Psoas muscle (tissue), 8 donors: ENCODE measurements at regions of chr22 and their contacts with region 1.

Region 1: GRCh38 chr22:17077255-17077654 is 7.5 kb upstream of the IL17RA start:
- DNase-seq: no peak
- ATAC-seq: no peak
- H3K4me3 ChIP-seq: no peak overlapping the region
- H3K27ac ChIP-seq: no peak overlapping the region
- H3K4me1 ChIP-seq: no peaks in the 10 kb centered on the region
- H3K27me3 ChIP-seq: no peaks in the 10 kb centered on the region
- CTCF ChIP-seq: no peak

Region 2: DNA sequence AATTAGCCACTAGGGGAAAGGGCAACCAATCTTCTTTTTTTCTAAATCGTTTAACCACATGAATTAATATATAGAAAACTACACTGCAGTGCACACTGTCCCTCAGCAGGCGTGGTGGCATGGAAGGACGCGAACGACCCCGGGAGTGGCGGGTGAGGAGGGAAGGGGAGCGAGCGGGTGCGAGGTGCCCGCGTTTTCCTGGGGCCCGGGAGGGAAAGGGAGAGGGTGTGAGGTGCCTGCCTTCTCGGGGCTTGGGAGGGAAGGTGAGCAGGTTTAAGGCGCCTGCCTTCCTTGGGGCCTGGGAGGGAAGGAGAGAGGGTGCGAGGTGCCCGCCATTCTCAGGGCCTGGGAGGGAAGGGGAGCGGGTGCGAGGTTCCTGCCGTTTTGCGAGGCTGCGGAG is 70.0 kb before region 1 on chr22:
- intact Hi-C with region 1: no loop called
- DNase-seq: peak in 1 of 2 donors; percentile 35
- ATAC-seq: no peak
- H3K4me3 ChIP-seq: no peak overlapping the region
- H3K27ac ChIP-seq: no peak overlapping the region
- H3K4me1 ChIP-seq: no peaks in the 10 kb centered on the region
- H3K27me3 ChIP-seq: peaks cover 0 to 18% (median 3%) of the 10 kb centered on the region in 3 donors
- CTCF ChIP-seq: no peak

Region 3: DNA sequence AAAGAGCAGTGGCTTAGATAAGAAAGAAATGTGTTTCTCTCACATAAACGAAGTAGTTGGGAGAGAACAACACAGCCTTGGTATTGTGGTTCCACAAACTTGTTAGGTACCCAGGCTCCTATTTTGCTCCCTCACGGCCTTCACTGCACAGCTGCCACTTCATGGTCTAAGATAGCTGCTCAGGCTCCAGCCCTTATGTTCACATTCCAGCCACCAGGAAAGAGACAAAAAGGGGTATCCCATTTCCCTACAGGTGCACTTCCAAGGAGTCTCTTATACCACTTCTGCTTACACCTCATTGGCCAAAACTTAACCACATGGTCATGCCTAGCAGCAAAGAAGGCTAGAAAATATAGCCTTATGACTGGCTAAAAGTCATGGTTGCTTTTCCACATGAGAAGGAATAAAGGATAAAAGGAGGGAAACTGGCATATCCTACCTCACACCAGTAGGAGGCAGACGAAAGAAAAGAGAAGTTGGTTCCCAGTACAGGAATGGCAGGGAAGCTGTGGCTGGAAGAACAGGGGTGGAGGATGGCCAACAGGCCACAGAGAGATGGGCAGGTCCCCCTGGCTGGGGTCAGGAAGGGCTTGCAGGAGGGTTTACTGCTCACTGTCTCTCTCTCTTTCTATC is 87.3 kb after region 1 on chr22:
- intact Hi-C with region 1: loop called in 1 of 2 experiments (anchors 5 kb)
- DNase-seq: no peak
- ATAC-seq: no peak
- H3K4me3 ChIP-seq: no peak overlapping the region
- H3K27ac ChIP-seq: no peak overlapping the region
- H3K4me1 ChIP-seq: peaks cover 12% of the 10 kb centered on the region
- H3K27me3 ChIP-seq: no peaks in the 10 kb centered on the region
- CTCF ChIP-seq: no peak